Natural killer cell (primary cell): ENCODE measurements at regions of chr16 and their contacts with region 1.

Region 1: GRCh38 chr16:8674413-8675022 is at the start of gene ABAT:
- DNase-seq: peak; percentile 91 to 92
- ATAC-seq: peak; percentile 96 to 99 (median 98)
- H3K4me3 ChIP-seq: peak within 1 kb of the TSS; percentile 69
- H3K4me3 Mint-ChIP-seq: peak within 1 kb of the TSS; percentile 96
- H3K27ac ChIP-seq: peak within 1 kb of the TSS; percentile 24
- H3K27ac Mint-ChIP-seq: peak within 1 kb of the TSS; percentile 83 to 94
- H3K4me1 ChIP-seq: peaks cover 20% of the 10 kb centered on the region
- H3K4me1 Mint-ChIP-seq: peaks cover 6 to 22% of the 10 kb centered on the region in 2 donors
- H3K27me3 ChIP-seq: no peaks in the 10 kb centered on the region
- H3K27me3 Mint-ChIP-seq: no peaks in the 10 kb centered on the region
- CTCF ChIP-seq: no peak
- total RNA-seq, gene ABAT: 11.0 to 13.4 (median 11.3) TPM

Region 2: GRCh38 chr16:8621572-8622314 is 52.8 kb before region 1 on chr16 and contains the start of gene METTL22:
- intact Hi-C with region 1: loop called (anchors 5 kb)
- DNase-seq: peak; percentile 95 to 96
- ATAC-seq: peak; percentile 96 to 99 (median 99)
- H3K4me3 ChIP-seq: peak within 1 kb of the TSS; percentile 97
- H3K4me3 Mint-ChIP-seq: peak within 1 kb of the TSS; percentile 88
- H3K27ac ChIP-seq: peak within 1 kb of the TSS; percentile 68
- H3K27ac Mint-ChIP-seq: peak within 1 kb of the TSS; percentile 73 to 87
- H3K4me1 ChIP-seq: peaks cover 13% of the 10 kb centered on the region
- H3K4me1 Mint-ChIP-seq: peaks cover 7 to 9% of the 10 kb centered on the region in 2 donors
- H3K27me3 ChIP-seq: no peaks in the 10 kb centered on the region
- H3K27me3 Mint-ChIP-seq: peaks cover 3 to 23% of the 10 kb centered on the region in 2 donors
- CTCF ChIP-seq: no peak
- total RNA-seq, gene METTL22: 27.1 to 45.8 (median 38.9) TPM

Region 3: DNA sequence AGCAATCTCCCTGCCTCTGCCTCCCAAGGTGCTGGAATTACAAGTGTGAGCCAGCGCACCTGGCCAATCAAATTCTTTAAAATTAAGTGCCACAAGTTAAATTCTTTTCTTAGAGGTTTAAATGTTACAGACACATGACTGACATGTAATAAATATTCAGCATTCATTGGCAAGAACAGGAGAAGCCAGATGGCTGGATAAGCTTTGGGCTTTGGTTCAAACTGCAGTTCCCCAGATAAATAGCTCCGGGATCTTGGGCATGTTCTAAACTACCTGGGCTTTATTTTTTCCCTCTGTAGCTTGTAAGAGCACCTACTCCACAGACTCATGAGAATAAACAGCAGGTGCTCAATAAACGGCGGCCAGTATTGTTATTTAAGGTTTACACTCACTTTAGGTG is 34.0 kb after region 1 on chr16:
- intact Hi-C with region 1: no loop called
- DNase-seq: no peak
- ATAC-seq: no peak
- H3K4me3 ChIP-seq: no peak overlapping the region
- H3K4me3 Mint-ChIP-seq: no peak overlapping the region
- H3K27ac ChIP-seq: no peak overlapping the region
- H3K27ac Mint-ChIP-seq: no peak overlapping the region
- H3K4me1 ChIP-seq: no peaks in the 10 kb centered on the region
- H3K4me1 Mint-ChIP-seq: peaks cover 11 to 13% of the 10 kb centered on the region in 2 donors
- H3K27me3 ChIP-seq: no peaks in the 10 kb centered on the region
- H3K27me3 Mint-ChIP-seq: no peaks in the 10 kb centered on the region
- CTCF ChIP-seq: no peak

Region 4: GRCh38 chr16:8868416-8869211 is 194.1 kb after region 1 on chr16 and contains the start of gene CARHSP1:
- intact Hi-C with region 1: loop called (anchors 5 kb)
- DNase-seq: peak; percentile 58 to 90
- ATAC-seq: peak; percentile 81 to 91 (median 83)
- H3K4me3 ChIP-seq: peak within 1 kb of the TSS; percentile 97
- H3K4me3 Mint-ChIP-seq: peak within 1 kb of the TSS; percentile 97
- H3K27ac ChIP-seq: peak within 1 kb of the TSS; percentile 69
- H3K27ac Mint-ChIP-seq: peak within 1 kb of the TSS; percentile 84 to 87
- H3K4me1 ChIP-seq: peaks cover 45% of the 10 kb centered on the region
- H3K4me1 Mint-ChIP-seq: peaks cover 49 to 61% of the 10 kb centered on the region in 2 donors
- H3K27me3 ChIP-seq: no peaks in the 10 kb centered on the region
- H3K27me3 Mint-ChIP-seq: no peaks in the 10 kb centered on the region
- CTCF ChIP-seq: no peak
- total RNA-seq, gene CARHSP1: 59.0 to 70.0 (median 60.1) TPM